Natural killer cell (primary cell): ENCODE measurements at regions of chr9 and their contacts with region 1.

Region 1: DNA sequence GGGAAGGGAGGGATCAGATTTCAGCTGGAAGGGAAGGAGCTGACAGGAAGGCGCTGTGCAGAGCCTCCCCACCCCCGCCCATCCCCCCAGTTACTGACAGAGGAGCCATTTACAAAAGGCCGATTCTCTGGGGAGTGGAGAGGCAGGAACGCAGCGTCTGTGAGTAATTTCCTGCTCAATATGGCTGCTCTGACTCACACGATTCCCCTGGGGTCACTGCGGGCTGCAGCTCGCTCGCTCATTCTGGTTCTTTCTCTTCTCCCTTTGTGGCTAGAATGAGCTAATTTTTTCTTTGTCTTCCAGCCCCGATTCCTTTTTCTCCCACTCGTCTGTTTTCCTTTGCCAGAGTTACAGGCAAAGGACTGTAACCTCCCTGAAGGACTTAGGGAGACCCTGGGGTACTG is 28.8 kb downstream of the PTPA start:
- DNase-seq: peak; percentile 67 to 90
- ATAC-seq: peak; percentile 84 to 86 (median 84)
- H3K4me3 ChIP-seq: peak overlapping the region; percentile 34
- H3K4me3 Mint-ChIP-seq: peak overlapping the region; percentile 92
- H3K27ac ChIP-seq: peak overlapping the region; percentile 100
- H3K27ac Mint-ChIP-seq: peak overlapping the region; percentile 91 to 93
- H3K4me1 ChIP-seq: peaks cover 35% of the 10 kb centered on the region
- H3K4me1 Mint-ChIP-seq: peaks cover 14 to 39% of the 10 kb centered on the region in 2 donors
- H3K27me3 ChIP-seq: no peaks in the 10 kb centered on the region
- H3K27me3 Mint-ChIP-seq: no peaks in the 10 kb centered on the region
- CTCF ChIP-seq: no peak

Region 2: GRCh38 chr9:129177791-129178559 is 38.0 kb after region 1 on chr9 and contains the start of gene IER5L:
- intact Hi-C with region 1: loop called (anchors 5 kb)
- DNase-seq: peak; percentile 94 to 95
- ATAC-seq: peak; percentile 89 to 95 (median 92)
- H3K4me3 ChIP-seq: peak within 1 kb of the TSS; percentile 76
- H3K4me3 Mint-ChIP-seq: peak within 1 kb of the TSS; percentile 91
- H3K27ac ChIP-seq: no peak within 1 kb of the TSS
- H3K27ac Mint-ChIP-seq: peak within 1 kb of the TSS in 1 of 2 donors; percentile 83
- H3K4me1 ChIP-seq: peaks cover 42% of the 10 kb centered on the region
- H3K4me1 Mint-ChIP-seq: peaks cover 6 to 37% of the 10 kb centered on the region in 2 donors
- H3K27me3 ChIP-seq: peaks cover 13% of the 10 kb centered on the region
- H3K27me3 Mint-ChIP-seq: peaks cover 5 to 7% of the 10 kb centered on the region in 2 donors
- CTCF ChIP-seq: no peak
- total RNA-seq, gene IER5L: 1.4 to 3.9 (median 2.8) TPM

Region 3: DNA sequence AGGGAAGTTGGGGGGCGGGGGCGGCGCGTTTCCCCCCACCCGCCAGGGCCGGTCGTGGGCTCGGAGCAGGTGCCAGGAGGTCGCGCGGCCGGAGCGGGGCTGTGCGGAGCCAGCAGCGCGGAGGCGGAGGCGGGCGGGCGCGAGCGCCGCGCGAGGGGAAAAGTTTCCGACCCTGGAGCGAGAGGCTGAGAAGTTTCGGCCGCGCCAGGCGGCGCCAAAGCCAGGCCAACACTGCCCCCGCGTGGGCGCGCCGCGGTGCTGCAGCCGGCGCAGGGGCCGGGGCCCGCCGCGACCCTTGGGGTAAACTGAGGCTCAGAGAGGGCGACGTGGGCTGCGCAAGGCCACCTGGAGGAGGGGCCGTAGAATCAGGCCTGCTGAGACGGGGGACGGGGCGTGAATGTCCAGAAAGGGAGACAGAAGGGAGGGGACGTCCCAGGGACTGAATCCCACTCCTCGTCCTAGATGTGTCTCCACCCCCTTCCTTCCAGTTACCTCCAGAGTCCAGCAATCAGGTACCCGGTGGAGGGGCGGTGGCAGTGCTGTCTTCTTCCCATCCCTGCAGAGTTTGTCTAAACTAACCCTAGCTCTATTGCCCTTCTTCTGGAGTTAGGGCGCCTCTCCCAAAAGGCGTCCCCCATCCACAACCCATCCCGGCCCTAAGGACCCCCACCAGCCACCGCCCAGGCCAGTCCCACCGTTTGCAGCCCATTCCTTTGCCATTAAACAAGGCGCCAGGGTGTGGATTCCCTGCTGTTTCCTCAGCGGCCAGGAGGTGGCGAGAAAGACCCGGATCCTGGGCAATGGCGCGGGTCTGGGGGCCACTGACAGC is 470.7 kb after region 1 on chr9:
- intact Hi-C with region 1: loop called (anchors 1 kb)
- DNase-seq: peak; percentile 71 to 85
- ATAC-seq: peak; percentile 72 to 87 (median 78)
- H3K4me3 ChIP-seq: peak overlapping the region; percentile 33
- H3K4me3 Mint-ChIP-seq: peak overlapping the region; percentile 62
- H3K27ac ChIP-seq: peak overlapping the region; percentile 37
- H3K27ac Mint-ChIP-seq: peak overlapping the region in 1 of 2 donors; percentile 96
- H3K4me1 ChIP-seq: peaks cover 43% of the 10 kb centered on the region
- H3K4me1 Mint-ChIP-seq: peaks cover 28 to 47% of the 10 kb centered on the region in 2 donors
- H3K27me3 ChIP-seq: no peaks in the 10 kb centered on the region
- H3K27me3 Mint-ChIP-seq: peaks cover 0 to 3% of the 10 kb centered on the region in 2 donors
- CTCF ChIP-seq: peak; percentile 98

Region 4: DNA sequence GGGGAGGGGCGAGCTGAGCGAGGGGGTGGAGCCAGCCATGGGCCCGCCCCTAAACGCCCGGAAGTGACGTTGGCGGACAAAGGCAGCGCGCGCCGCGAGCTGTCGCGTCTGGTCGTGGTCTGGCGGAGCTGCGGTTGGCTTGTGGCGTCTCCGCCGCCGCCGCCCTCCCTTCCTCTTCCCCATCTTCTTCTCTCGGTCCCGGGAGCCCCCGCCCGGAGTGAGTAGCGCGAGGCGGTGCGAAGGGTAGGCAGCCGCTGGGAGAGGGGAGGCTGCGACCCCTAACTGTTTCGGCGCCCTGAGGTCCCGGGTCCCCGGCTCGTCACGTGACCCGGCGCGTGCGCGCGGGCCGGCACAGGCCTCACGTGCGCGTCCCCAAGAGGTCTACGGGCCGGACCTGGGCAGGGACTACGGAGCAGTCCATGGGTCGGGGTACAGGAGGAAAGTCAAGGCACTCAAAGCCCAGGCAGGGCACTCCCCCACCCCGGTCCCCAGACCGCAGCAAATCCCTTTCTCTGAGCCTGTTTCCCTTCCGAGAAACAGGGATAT is 486.2 kb after region 1 on chr9 and contains the start of gene NTMT1:
- intact Hi-C with region 1: loop called (anchors 1 kb)
- DNase-seq: peak; percentile 92 to 94
- ATAC-seq: peak; percentile 86 to 92 (median 89)
- H3K4me3 ChIP-seq: peak within 1 kb of the TSS; percentile 90
- H3K4me3 Mint-ChIP-seq: peak within 1 kb of the TSS; percentile 84
- H3K27ac ChIP-seq: peak within 1 kb of the TSS; percentile 91
- H3K27ac Mint-ChIP-seq: peak within 1 kb of the TSS; percentile 93
- H3K4me1 ChIP-seq: peaks cover 49% of the 10 kb centered on the region
- H3K4me1 Mint-ChIP-seq: peaks cover 42 to 48% of the 10 kb centered on the region in 2 donors
- H3K27me3 ChIP-seq: peaks cover 8% of the 10 kb centered on the region
- H3K27me3 Mint-ChIP-seq: peaks cover 4 to 8% of the 10 kb centered on the region in 2 donors
- CTCF ChIP-seq: no peak
- total RNA-seq, gene NTMT1: 17.1 to 23.5 (median 17.1) TPM